ENCODE measurements at regions of chr7 and their contacts with region 1.

Region 1: GRCh38 chr7:151351027-151351426 is 9.4 kb downstream of the NUB1 start:
- DNase-seq: peak; percentile 75
- ATAC-seq: peak; percentile 96
- H3K4me3 Mint-ChIP-seq: no peak overlapping the region
- H3K27ac Mint-ChIP-seq: no peak overlapping the region
- H3K4me1 Mint-ChIP-seq: no peaks in the 10 kb centered on the region
- H3K27me3 Mint-ChIP-seq: no peaks in the 10 kb centered on the region
- CTCF ChIP-seq: peak; percentile 53

Region 2: DNA sequence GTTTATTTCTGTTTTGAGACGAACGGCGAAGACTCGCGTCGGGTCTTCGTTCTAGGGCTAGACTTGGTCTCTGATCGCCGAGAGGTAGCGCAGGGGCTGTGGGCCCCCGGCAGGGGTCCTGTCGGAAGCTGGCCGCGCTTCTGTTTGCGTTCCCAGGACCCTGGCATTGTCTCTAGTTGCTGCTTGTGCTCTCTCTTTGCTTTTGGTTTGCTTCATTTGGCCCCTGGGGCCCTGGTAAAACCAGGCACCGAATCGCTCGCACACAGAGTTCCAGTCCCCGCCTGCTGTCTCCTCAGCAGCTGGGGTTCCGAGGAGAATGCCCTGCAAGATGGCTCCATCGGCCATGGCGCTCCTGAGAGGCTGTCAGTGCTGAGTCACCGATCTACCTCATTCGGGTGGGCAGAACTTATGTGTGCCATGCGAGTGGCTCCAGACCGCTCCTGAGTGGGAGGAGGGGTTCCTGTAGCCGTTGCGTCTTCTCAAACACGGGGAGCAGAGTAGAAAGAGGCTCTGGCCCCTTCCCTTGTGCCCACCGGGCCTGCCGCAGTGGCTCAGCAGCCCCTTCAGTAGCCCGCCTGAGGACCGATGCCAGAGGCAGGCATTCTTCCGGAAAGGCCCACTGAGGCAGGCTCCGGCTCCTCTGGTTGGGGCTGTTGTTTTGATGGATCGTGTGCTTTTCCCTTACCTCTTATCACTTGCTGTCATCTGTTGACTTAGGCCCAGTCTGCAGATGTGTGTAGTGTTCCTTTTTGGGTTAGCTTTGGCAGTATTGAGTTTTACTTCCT is 117.9 kb before region 1 on chr7:
- CTCF ChIA-PET with region 1: no interaction called
- POLR2A ChIA-PET with region 1: no interaction called
- DNase-seq: no peak
- ATAC-seq: peak; percentile 16
- H3K4me3 Mint-ChIP-seq: peak overlapping the region; percentile 99
- H3K27ac Mint-ChIP-seq: peak overlapping the region; percentile 90
- H3K4me1 Mint-ChIP-seq: peaks cover 21% of the 10 kb centered on the region
- H3K27me3 Mint-ChIP-seq: no peaks in the 10 kb centered on the region
- CTCF ChIP-seq: no peak

Region 3: GRCh38 chr7:151304856-151305255 is 46.2 kb before region 1 on chr7:
- CTCF ChIA-PET with region 1: interaction called, 41 read pairs
- POLR2A ChIA-PET with region 1: interaction called, 3 read pairs
- DNase-seq: no peak
- ATAC-seq: peak; percentile 71
- H3K4me3 Mint-ChIP-seq: peak overlapping the region; percentile 73
- H3K27ac Mint-ChIP-seq: peak overlapping the region; percentile 95
- H3K4me1 Mint-ChIP-seq: peaks cover 14% of the 10 kb centered on the region
- H3K27me3 Mint-ChIP-seq: peaks cover 23% of the 10 kb centered on the region
- CTCF ChIP-seq: no peak

Region 4: DNA sequence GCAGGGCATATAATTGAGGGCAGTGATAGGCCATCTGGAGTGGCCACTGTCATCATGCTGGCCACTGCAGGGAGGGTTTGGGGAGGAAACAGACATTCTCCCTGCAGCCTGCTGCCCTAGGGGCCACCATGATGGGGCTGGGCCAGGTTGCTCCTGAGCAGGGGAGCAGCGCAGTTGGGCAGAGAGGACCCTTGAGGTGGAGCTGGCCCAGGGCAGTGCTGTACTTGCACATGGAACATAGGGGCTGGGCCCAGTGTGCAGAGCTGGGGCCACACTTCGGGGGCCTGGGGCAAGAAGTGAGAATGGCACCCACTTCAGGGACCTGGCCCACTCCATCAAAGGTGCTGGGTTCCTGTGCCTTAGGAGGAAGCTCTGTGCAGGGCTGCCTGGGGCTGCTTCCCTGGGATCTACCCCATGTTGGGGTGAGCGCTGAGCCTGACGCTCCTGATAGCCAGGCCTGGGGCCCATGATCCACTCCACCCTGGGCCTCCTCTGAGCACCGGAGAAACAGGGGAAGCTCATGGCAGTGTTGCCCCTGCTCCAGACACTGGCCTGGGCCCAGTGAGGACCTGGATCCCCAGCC is 30.7 kb before region 1 on chr7:
- CTCF ChIA-PET with region 1: interaction called, 71 read pairs
- POLR2A ChIA-PET with region 1: interaction called, 3 read pairs
- DNase-seq: no peak
- ATAC-seq: no peak
- H3K4me3 Mint-ChIP-seq: no peak overlapping the region
- H3K27ac Mint-ChIP-seq: no peak overlapping the region
- H3K4me1 Mint-ChIP-seq: no peaks in the 10 kb centered on the region
- H3K27me3 Mint-ChIP-seq: peaks cover 9% of the 10 kb centered on the region
- CTCF ChIP-seq: no peak

Region 5: GRCh38 chr7:151327659-151328058 is 23.4 kb before region 1 on chr7:
- CTCF ChIA-PET with region 1: interaction called, 15 read pairs
- POLR2A ChIA-PET with region 1: interaction called, 3 read pairs
- DNase-seq: no peak
- ATAC-seq: no peak
- H3K4me3 Mint-ChIP-seq: no peak overlapping the region
- H3K27ac Mint-ChIP-seq: no peak overlapping the region
- H3K4me1 Mint-ChIP-seq: peaks cover 19% of the 10 kb centered on the region
- H3K27me3 Mint-ChIP-seq: peaks cover 3% of the 10 kb centered on the region
- CTCF ChIP-seq: no peak

Region 6: DNA sequence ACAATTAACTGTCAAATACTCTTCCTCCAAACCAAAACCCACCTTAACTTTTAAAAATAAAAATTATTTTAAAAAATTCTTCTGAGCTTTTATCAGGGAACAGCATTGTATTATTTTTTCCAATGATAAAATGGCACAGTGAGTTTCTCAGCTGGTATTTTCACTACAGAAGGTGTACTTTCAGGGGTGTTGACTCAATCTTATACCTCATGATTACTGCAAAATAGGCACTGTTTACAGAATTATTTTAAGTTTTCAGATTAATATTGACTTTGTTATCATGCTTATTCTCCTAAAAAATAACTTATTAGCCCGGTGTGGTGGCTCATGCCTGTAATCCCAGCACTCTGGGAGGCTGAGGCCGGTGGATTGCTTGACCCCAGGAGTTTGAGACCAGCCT is 144.3 kb after region 1 on chr7:
- CTCF ChIA-PET with region 1: no interaction called
- POLR2A ChIA-PET with region 1: no interaction called
- DNase-seq: no peak
- ATAC-seq: no peak
- H3K4me3 Mint-ChIP-seq: no peak overlapping the region
- H3K27ac Mint-ChIP-seq: no peak overlapping the region
- H3K4me1 Mint-ChIP-seq: peaks cover 79% of the 10 kb centered on the region
- H3K27me3 Mint-ChIP-seq: no peaks in the 10 kb centered on the region
- CTCF ChIP-seq: no peak

Measured in WTC11 (cell line).